Dorsolateral prefrontal cortex (tissue), 120 donors: ENCODE measurements at regions of chr17 and their contacts with region 1.

Region 1: DNA sequence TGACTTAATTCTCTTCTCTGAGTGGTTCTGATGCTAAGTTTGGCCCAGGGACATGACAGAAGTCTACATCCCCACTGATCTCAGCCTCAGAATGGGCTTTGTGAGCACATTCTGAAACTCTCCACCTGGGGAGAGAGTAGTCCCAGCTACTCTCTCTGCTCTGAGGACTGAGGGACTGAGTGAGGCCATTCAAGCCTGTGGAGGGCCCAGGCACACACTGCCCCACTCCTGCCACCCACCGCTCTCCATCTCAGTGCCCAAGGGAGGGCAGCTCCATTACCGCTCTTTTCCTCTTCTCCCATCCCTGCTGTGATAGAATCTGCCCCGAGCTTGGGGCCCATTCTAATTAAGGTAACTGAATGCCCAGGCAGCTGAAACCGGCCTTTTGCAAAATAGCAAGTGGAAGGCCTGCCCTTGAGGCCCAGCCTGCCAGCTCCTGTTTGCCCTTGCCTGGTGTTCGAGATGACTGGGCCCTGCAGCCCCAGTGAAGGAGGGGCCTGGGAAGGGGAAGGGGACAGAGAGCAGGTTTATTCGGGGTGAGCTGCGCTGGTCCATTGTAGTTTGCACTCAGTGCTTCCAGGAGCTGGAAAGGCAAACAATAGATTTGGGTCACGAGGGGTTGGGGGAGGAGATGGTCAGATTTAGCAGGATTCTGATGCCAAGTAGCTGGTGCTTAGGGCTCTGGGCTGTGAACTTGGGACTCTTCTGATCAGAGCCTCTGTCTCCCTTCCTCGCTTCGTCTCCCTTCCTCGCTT is 76.2 kb downstream of the RAB11FIP4 start:
- DNase-seq: peak; percentile 43 to 84 (median 76)
- H3K4me3 ChIP-seq: peak overlapping the region in 2 of 59 donors; percentile 11 to 17
- H3K27ac ChIP-seq: peak overlapping the region; percentile 61 to 98 (median 93)
- H3K27me3 ChIP-seq: no peaks in the 10 kb centered on the region
- CTCF ChIP-seq: peak in 2 of 56 donors; percentile 8 to 28

Region 2: DNA sequence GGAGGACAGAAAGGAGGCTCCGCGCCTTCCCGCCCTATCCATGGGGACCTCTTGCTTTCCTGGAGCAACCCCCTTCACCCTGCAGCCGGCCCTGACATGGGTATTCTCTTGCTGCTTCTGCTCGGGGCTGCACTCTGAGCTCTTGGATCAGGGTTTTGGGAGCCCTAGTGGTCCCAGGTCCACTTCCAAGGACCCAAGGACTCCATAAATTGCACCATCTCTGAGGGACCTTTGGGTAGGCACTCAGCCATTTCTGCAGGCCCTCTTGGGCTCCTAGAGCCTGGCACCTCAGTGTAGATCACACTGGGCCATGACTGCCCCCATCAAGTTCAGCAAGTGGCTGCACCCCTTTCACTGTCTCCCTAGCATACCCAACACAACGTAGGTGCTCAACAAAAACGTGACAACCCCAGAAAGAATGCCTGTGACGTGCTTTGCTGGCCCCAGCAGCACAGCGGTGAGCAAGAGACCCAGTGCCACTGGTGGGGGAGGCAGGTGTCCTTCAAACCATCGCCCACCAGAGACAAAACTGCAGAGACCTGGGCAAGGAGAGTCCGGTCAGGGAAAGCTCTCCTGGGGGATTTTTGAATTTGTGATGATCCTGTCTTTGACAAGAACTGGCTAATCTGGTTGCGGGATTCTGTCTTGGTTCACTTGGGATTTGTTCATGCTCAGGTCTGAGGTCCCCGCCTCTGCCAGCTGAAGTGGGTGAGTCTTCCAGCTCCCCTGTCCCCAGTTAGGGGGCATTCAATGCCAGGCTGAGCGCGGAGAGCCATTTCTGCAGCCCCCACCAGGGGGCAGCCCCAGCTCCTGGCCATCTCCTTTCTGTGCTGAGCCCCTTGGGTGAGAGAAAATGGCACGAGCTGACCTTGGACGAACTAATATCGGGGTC is 78.7 kb before region 1 on chr17:
- intact Hi-C with region 1: no loop called
- DNase-seq: peak in 6 of 10 donors; percentile 49 to 79 (median 60)
- H3K4me3 ChIP-seq: peak overlapping the region in 1 of 59 donors; percentile 18
- H3K27ac ChIP-seq: peak overlapping the region in 33 of 59 donors; percentile 2 to 91 (median 59)
- H3K27me3 ChIP-seq: peaks cover 0 to 6% (median 0%) of the 10 kb centered on the region in 45 donors
- CTCF ChIP-seq: peak; percentile 55 to 89 (median 80)

Region 3: DNA sequence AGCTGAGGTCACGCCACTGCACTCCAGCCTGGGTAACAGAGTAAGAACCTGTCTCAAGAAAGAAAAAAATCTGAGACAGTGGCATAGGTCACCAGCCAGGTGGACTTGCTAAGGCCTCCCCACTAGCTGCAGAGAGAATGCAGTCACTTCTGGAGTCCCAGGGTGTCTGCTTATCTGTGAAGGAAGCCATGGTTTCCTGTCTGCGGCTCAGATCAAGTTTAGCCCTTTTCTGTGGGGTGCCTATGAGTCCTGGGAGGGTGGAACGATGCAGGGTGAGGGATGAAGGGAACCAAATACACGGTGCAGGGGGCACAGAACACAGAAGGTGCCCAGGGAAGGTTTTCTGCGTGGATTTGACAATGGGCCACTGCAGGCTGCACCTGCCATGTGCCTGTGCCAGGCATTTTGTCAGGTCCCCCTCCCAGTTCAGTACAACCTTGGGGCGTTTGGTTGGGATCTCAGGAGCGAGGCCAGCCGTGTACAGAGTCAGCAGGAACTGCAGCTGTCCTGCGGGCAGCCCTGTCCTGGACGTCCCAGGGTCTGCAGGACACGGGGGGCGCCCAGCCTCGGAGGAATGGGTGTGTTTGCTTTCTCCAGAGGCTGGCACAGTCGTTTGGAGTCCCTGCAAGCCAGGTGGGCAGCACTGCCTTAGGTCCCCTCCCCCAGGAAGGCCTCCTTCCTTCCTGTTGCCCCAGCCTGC is 34.4 kb before region 1 on chr17:
- intact Hi-C with region 1: loop called in 1 of 2 experiments (anchors 5 kb)
- DNase-seq: no peak
- H3K4me3 ChIP-seq: no peak overlapping the region
- H3K27ac ChIP-seq: peak overlapping the region in 2 of 59 donors; percentile 17 to 41
- H3K27me3 ChIP-seq: no peaks in the 10 kb centered on the region
- CTCF ChIP-seq: no peak

Region 4: DNA sequence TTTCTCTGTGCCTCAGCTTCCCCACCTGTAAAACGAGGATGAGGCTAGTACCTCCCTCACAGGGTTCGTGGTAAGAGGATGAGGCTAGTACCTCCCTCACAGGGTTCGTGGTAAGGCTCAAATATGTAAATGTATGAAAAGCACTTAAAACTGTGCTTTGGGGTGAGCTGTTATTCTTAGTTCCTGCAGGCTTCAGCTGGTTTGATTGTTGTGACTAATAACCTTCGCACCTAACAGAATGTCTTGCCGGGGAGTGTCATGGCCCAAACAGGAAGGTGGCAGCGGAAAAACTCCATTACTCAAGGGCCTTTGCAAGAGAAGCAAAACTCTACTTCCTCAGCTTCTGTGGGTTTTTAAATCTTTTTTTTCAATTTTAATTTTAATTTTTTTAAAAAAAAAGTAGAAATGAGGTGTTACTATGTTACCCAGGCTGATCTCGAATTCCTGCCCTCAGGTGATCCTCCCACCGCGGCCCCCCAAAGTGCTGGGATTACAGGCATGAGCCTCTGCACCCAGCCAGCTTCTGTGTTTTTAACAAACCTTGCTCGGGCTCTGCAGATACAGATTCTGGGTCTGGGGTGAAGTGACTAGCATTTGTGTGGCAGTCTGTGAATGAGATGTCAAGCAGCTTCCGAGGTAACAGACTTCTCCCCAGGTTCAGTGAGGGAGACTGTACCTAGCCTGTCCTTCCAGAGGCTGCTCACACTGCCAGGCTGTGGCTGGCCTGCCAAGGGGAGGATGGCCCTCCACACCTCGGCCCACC is 26.8 kb after region 1 on chr17:
- intact Hi-C with region 1: no loop called
- DNase-seq: no peak
- H3K4me3 ChIP-seq: no peak overlapping the region
- H3K27ac ChIP-seq: peak overlapping the region in 27 of 59 donors; percentile 0 to 74 (median 32)
- H3K27me3 ChIP-seq: no peaks in the 10 kb centered on the region
- CTCF ChIP-seq: no peak

Region 5: GRCh38 chr17:31510308-31511194 is 42.9 kb after region 1 on chr17:
- intact Hi-C with region 1: loop called (anchors 5 to 10 kb)
- DNase-seq: peak; percentile 51 to 95 (median 82)
- H3K4me3 ChIP-seq: peak overlapping the region in 5 of 59 donors; percentile 2 to 13 (median 4)
- H3K27ac ChIP-seq: peak overlapping the region; percentile 62 to 94 (median 85)
- H3K27me3 ChIP-seq: no peaks in the 10 kb centered on the region
- CTCF ChIP-seq: no peak

Region 6: GRCh38 chr17:31517524-31517923 is 49.8 kb after region 1 on chr17:
- intact Hi-C with region 1: loop called (anchors 5 to 10 kb)
- DNase-seq: no peak
- H3K4me3 ChIP-seq: no peak overlapping the region
- H3K27ac ChIP-seq: peak overlapping the region in 14 of 59 donors; percentile 7 to 62 (median 32)
- H3K27me3 ChIP-seq: no peaks in the 10 kb centered on the region
- CTCF ChIP-seq: peak in 28 of 56 donors; percentile 7 to 53 (median 28)